OCI-LY7 (cell line): ENCODE measurements at regions of chr19 and their contacts with region 1.

Region 1: GRCh38 chr19:3710265-3710812 is 2.2 kb downstream of the TJP3 start:
- DNase-seq: no peak
- H3K4me3 ChIP-seq: no peak overlapping the region
- H3K27ac ChIP-seq: no peak overlapping the region
- H3K4me1 ChIP-seq: no peaks in the 10 kb centered on the region
- CTCF ChIP-seq: no peak

Region 2: GRCh38 chr19:3544742-3545668 is 165.3 kb before region 1 on chr19:
- CTCF ChIA-PET with region 1: no interaction called
- POLR2A ChIA-PET with region 1: no interaction called
- intact Hi-C with region 1: loop called (anchors 5 kb)
- DNase-seq: peak; percentile 58
- H3K4me3 ChIP-seq: no peak overlapping the region
- H3K27ac ChIP-seq: no peak overlapping the region
- H3K4me1 ChIP-seq: no peaks in the 10 kb centered on the region
- CTCF ChIP-seq: peak; percentile 88

Region 3: GRCh38 chr19:3665681-3666544 is 44.4 kb before region 1 on chr19:
- CTCF ChIA-PET with region 1: no interaction called
- POLR2A ChIA-PET with region 1: no interaction called
- intact Hi-C with region 1: loop called (anchors 1 kb)
- DNase-seq: peak; percentile 55
- H3K4me3 ChIP-seq: peak overlapping the region; percentile 58
- H3K27ac ChIP-seq: peak overlapping the region; percentile 68
- H3K4me1 ChIP-seq: peaks cover 25% of the 10 kb centered on the region
- CTCF ChIP-seq: peak; percentile 88